Activated T-helper 2 cell treated with anti-CD3 and anti-CD28 coated beads, Interferon-gamma antibody, Interleukin-2, Interleukin-4, amounts not matched to agents 10 μg/mL and 5 μg/mL and 100 μg/mL, durations not matched to agents 14 hours and 24 hours and 36 hours (primary cell): ENCODE measurements at regions of chr2 and their contacts with region 1.

Region 1: DNA sequence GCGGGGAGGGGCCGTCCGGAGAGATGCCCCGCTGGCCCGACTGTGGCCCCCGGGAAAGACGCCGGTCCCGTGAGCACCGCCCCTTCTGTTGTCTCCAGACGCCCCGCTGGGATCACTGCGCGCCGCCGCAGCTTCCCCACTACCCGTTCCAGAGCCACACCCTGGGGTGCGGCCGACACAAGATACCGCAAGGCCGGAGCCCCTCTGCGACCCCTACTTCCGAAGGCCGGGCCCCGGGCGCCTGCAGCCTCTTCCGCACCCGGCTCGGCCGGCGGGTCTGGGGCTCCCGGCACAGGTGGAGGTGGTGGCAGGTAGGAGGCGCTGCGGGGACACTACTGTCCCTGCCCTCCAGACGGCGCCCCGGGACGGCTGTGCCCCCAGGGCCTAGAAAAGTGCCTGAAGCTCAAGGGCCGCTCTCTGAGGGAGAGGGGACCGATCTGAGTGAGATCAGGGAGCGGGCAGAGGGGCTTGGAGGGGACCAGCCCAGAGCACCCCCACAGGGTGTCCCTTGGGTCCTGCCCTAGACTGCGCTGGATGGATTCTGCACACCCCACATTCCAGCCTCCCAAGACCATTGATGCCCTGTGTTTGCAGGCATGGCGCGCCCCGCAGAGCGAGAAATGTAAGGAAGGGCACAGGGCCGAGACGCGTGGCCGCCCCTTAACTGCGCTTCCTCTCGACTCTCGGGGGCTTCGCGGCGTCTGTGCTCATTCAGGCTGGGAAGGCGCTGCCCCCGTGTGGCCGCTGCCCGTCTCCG is 80.0 kb downstream of the GFPT1 start:
- DNase-seq: peak; percentile 56
- H3K4me3 Mint-ChIP-seq: peak overlapping the region; percentile 56
- H3K27ac Mint-ChIP-seq: no peak overlapping the region
- H3K4me1 Mint-ChIP-seq: peaks cover 7% of the 10 kb centered on the region
- H3K27me3 Mint-ChIP-seq: peaks cover 32% of the 10 kb centered on the region

Region 2: GRCh38 chr2:68943581-68944568 is 363.1 kb before region 1 on chr2:
- intact Hi-C with region 1: loop called (anchors 2 kb)
- DNase-seq: peak; percentile 35
- H3K4me3 Mint-ChIP-seq: no peak overlapping the region
- H3K27ac Mint-ChIP-seq: no peak overlapping the region
- H3K4me1 Mint-ChIP-seq: peaks cover 4% of the 10 kb centered on the region
- H3K27me3 Mint-ChIP-seq: peaks cover 59% of the 10 kb centered on the region

Region 3: DNA sequence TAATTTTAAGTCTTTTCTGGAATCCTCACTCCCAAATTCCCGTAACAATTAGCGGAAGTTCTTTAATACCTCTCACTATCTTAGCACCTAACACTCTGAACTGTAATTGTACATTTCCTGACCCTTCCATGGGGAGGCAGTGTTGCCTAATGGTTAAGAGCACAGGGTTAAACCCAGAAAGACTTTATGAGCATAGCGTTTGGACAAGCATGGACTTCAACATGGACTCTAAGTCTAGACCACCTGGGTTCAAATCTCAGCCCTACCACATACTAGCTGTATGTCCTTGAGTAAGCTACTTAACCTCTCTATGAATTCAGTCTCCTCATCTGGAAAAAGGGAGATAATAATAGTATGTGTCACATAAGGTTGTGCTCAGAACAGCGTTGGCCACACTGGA is 281.0 kb before region 1 on chr2:
- intact Hi-C with region 1: loop called (anchors 1 kb)
- DNase-seq: no peak
- H3K4me3 Mint-ChIP-seq: no peak overlapping the region
- H3K27ac Mint-ChIP-seq: no peak overlapping the region
- H3K4me1 Mint-ChIP-seq: no peaks in the 10 kb centered on the region
- H3K27me3 Mint-ChIP-seq: peaks cover 25% of the 10 kb centered on the region